T-cell (primary cell): ENCODE measurements at regions of chr3 and their contacts with region 1.

Region 1: GRCh38 chr3:45010718-45011366 is 15.3 kb upstream of the CLEC3B start:
- DNase-seq: no peak
- ATAC-seq: no peak
- H3K4me3 ChIP-seq: no peak overlapping the region
- H3K4me3 Mint-ChIP-seq: no peak overlapping the region
- H3K27ac ChIP-seq: peak overlapping the region; percentile 2
- H3K27ac Mint-ChIP-seq: peak overlapping the region; percentile 68 to 83
- H3K4me1 ChIP-seq: peaks cover 6 to 27% of the 10 kb centered on the region in 2 experiments
- H3K4me1 Mint-ChIP-seq: peaks cover 15 to 50% (median 49%) of the 10 kb centered on the region in 3 donors
- H3K27me3 ChIP-seq: no peaks in the 10 kb centered on the region
- H3K27me3 Mint-ChIP-seq: no peaks in the 10 kb centered on the region

Region 2: DNA sequence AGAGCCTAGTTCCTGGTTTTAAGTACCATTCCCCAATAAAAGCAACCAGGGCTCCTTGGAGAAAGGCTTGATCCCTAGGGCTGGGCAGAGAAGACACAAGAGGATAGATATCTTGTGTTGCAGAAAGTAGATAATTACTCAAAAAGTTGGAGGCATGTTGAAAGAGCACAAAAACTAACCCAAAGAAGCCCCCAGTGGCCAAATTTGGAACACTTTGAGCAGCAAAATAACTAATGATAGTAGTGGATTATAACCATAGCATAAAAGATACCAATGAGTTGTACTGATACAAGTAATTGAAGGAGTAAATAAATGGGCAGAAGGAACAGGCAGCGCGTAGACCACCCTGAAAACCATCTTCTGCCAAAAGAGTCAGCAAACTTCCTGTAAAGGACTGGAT is 22.8 kb before region 1 on chr3:
- CTCF ChIA-PET with region 1: interaction called in 1 of 2 experiments, 10 read pairs
- POLR2A ChIA-PET with region 1: no interaction called
- DNase-seq: peak in 1 of 35 experiments; percentile 35
- ATAC-seq: no peak
- H3K4me3 ChIP-seq: no peak overlapping the region
- H3K4me3 Mint-ChIP-seq: no peak overlapping the region
- H3K27ac ChIP-seq: no peak overlapping the region
- H3K27ac Mint-ChIP-seq: no peak overlapping the region
- H3K4me1 ChIP-seq: peaks cover 42 to 45% of the 10 kb centered on the region in 2 experiments
- H3K4me1 Mint-ChIP-seq: peaks cover 76 to 83% (median 76%) of the 10 kb centered on the region in 3 donors
- H3K27me3 ChIP-seq: no peaks in the 10 kb centered on the region
- H3K27me3 Mint-ChIP-seq: no peaks in the 10 kb centered on the region

Region 3: DNA sequence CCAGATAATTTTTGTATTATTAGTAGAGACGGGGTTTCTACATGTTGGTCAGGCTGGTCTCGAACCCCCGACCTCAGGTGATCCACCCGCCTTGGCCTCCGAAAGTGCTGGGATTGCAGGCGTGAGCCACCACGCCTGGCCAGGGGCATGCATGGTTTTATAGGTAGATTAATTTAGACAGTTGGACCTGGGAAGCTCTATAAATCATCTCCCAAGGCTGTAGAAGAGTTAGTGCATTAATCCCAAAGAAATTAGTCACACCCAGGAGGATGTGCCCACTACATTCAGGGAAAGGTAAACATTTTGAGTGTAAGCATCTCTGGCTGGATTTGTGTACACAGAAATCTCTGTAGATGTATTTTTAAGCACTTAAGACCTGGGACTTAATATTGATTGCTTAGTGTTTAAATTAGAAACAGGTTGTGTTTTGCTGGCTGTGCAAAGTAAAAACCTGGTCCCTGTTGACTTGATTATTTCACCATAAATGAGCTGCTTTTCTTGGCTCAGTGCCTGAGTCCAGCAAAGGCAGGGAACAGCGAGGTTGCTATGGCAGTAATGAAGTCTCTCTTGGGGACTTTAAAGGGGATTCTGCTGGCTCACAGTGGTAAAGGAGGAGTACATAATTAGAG is 15.6 kb before region 1 on chr3:
- CTCF ChIA-PET with region 1: interaction called, 3 to 11 read pairs
- POLR2A ChIA-PET with region 1: no interaction called
- DNase-seq: no peak
- ATAC-seq: no peak
- H3K4me3 ChIP-seq: no peak overlapping the region
- H3K4me3 Mint-ChIP-seq: no peak overlapping the region
- H3K27ac ChIP-seq: no peak overlapping the region
- H3K27ac Mint-ChIP-seq: peak overlapping the region; percentile 38 to 57
- H3K4me1 ChIP-seq: peaks cover 20 to 44% of the 10 kb centered on the region in 2 experiments
- H3K4me1 Mint-ChIP-seq: peaks cover 38 to 65% (median 61%) of the 10 kb centered on the region in 3 donors
- H3K27me3 ChIP-seq: no peaks in the 10 kb centered on the region
- H3K27me3 Mint-ChIP-seq: no peaks in the 10 kb centered on the region